Activated T-helper 2 cell treated with anti-CD3 and anti-CD28 coated beads, Interferon-gamma antibody, Interleukin-2, Interleukin-4, amounts not matched to agents 10 μg/mL and 5 μg/mL and 100 μg/mL, durations not matched to agents 14 hours and 24 hours and 36 hours (primary cell): ENCODE measurements at regions of chr4 and their contacts with region 1.

Region 1: DNA sequence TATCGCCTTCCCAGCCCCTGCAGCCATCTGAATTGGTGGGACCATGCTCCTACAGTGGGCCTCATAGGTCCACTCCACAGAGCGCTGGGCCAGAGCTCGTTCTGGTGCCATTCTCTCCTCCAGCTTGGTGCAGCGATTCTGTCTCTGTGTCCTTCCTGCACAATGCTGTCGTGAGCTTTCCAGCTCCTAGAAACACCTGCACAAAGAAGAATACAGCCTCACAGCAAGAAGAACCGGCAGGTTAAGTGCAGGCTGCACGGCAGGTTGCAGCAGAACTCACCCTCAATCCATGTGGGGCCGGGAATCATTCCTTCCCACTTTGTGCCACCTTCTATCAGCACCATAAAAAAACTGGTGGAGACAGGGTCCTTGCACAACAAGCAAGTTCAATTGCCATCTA is 101.2 kb upstream of the ENPP6 start:
- DNase-seq: peak; percentile 8
- H3K4me3 Mint-ChIP-seq: no peak overlapping the region
- H3K27ac Mint-ChIP-seq: peak overlapping the region; percentile 24
- H3K4me1 Mint-ChIP-seq: peaks cover 44% of the 10 kb centered on the region
- H3K27me3 Mint-ChIP-seq: no peaks in the 10 kb centered on the region

Region 2: GRCh38 chr4:184287697-184288255 is 31.1 kb before region 1 on chr4:
- intact Hi-C with region 1: loop called (anchors 1 kb)
- DNase-seq: no peak
- H3K4me3 Mint-ChIP-seq: no peak overlapping the region
- H3K27ac Mint-ChIP-seq: peak overlapping the region; percentile 13
- H3K4me1 Mint-ChIP-seq: peaks cover 49% of the 10 kb centered on the region
- H3K27me3 Mint-ChIP-seq: no peaks in the 10 kb centered on the region